Activated T-helper 1 cell treated with anti-CD3 and anti-CD28 coated beads, Interleukin-12 subunit alpha, Interleukin-12 subunit beta, Interleukin-2, Interleukin-4 antibody, amounts not matched to agents 30 ng/mL and 10 ng/mL and 1 ng/mL, durations not matched to agents 14 hours and 24 hours and 36 hours (primary cell): ENCODE measurements at regions of chr16 and their contacts with region 1.

Region 1: DNA sequence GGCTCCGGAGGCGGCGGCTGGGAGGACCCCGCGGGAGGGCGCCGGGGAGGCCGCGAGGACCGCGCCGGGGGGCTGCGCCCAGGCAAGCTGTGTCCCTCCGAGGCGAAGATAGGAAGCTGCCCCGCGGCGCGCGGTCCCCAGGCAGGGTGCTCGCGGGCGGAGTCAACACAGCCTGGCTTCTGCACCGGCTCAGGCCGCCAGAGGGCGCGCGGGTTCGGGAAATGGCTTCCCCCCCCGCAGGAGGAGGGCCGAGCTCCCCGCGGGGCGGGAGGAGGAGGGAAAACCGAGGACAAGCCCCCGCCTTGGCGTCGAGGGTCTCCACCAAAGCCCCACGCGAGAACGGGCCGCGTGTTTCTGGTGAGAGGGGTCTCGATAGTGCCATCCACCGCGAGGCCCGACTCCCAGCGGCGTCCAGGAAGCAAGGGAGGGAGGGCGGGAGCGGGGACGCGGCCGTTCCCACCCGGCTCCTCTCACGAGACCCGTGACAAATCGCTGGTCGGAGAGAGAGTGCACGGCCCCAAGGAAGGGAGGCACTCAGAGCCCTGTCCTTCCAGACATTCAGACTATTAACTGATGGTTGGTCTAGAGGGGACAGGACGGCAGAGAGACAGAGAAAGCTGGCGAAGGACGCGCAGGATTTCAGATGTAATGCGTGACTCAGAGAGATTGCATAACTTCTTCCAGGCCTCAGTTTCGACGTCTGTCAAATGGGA is 64.4 kb upstream of the DNAJA2 start:
- DNase-seq: peak; percentile 85
- H3K4me3 Mint-ChIP-seq: peak overlapping the region; percentile 81
- H3K27ac Mint-ChIP-seq: no peak overlapping the region
- H3K4me1 Mint-ChIP-seq: peaks cover 4% of the 10 kb centered on the region
- H3K27me3 Mint-ChIP-seq: peaks cover 14% of the 10 kb centered on the region

Region 2: DNA sequence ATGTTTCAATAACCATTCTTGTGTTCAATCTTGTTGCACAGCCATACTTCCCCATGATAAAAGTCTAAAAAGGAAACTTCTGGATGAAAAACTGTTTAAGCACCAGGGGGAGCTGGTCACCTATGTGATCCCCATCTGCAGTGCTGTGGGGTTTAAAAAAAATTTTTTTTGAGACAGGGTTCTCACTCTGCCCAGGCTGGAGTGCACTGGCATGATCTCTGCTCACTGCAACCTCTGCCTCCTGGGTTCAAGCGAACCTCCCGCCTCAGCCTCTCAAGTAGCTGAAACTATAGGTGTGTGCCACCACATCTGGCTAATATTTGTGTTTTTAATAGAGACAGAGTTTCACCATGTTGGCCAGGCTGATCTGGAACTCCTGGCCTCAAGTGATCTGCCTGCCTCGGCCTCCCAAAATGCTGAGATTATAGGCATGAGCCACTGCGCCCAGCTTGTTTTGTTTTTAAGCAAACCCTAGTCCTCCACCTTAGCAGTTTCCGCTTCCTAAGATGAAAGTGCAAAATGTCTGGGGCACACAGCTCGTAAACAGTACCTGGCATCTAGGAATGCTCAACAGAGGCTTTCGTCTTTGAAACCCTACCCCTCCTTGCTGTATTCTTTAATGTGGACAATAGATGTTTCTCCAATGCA is 89.9 kb before region 1 on chr16:
- intact Hi-C with region 1: loop called (anchors 1 kb)
- DNase-seq: peak; percentile 19
- H3K4me3 Mint-ChIP-seq: no peak overlapping the region
- H3K27ac Mint-ChIP-seq: no peak overlapping the region
- H3K4me1 Mint-ChIP-seq: peaks cover 9% of the 10 kb centered on the region
- H3K27me3 Mint-ChIP-seq: peaks cover 2% of the 10 kb centered on the region

Region 3: GRCh38 chr16:47018223-47018891 is 19.5 kb before region 1 on chr16:
- intact Hi-C with region 1: loop called (anchors 2 kb)
- DNase-seq: peak; percentile 24
- H3K4me3 Mint-ChIP-seq: no peak overlapping the region
- H3K27ac Mint-ChIP-seq: no peak overlapping the region
- H3K4me1 Mint-ChIP-seq: peaks cover 23% of the 10 kb centered on the region
- H3K27me3 Mint-ChIP-seq: peaks cover 4% of the 10 kb centered on the region

Region 4: GRCh38 chr16:47049901-47050583 is 12.1 kb after region 1 on chr16:
- intact Hi-C with region 1: no loop called
- DNase-seq: no peak
- H3K4me3 Mint-ChIP-seq: no peak overlapping the region
- H3K27ac Mint-ChIP-seq: no peak overlapping the region
- H3K4me1 Mint-ChIP-seq: peaks cover 9% of the 10 kb centered on the region
- H3K27me3 Mint-ChIP-seq: no peaks in the 10 kb centered on the region

Region 5: DNA sequence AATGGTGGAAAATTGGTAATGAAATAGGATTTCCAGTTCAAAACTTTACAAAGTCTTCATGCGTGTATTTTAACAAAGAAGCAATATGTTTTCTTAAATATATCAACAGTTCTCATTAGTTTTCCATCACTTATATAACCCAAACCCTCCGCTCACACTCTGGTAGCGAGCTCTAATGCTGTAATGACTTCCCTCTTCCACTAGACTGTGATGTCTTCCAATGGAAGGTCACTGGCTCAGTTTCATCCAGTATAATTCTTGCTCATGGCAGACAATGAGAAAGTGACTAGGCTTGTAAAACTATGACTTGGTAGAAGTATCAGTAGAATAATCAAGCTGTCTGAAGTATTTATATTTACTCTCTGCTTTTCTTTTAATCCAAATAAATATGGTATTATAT is 73.0 kb after region 1 on chr16:
- intact Hi-C with region 1: loop called (anchors 1 kb)
- DNase-seq: no peak
- H3K4me3 Mint-ChIP-seq: no peak overlapping the region
- H3K27ac Mint-ChIP-seq: no peak overlapping the region
- H3K4me1 Mint-ChIP-seq: peaks cover 20% of the 10 kb centered on the region
- H3K27me3 Mint-ChIP-seq: no peaks in the 10 kb centered on the region

Region 6: GRCh38 chr16:48054881-48055601 is 1017.1 kb after region 1 on chr16:
- intact Hi-C with region 1: loop called (anchors 1 kb)
- DNase-seq: peak; percentile 11
- H3K4me3 Mint-ChIP-seq: no peak overlapping the region
- H3K27ac Mint-ChIP-seq: no peak overlapping the region
- H3K4me1 Mint-ChIP-seq: peaks cover 8% of the 10 kb centered on the region
- H3K27me3 Mint-ChIP-seq: peaks cover 25% of the 10 kb centered on the region

Region 7: DNA sequence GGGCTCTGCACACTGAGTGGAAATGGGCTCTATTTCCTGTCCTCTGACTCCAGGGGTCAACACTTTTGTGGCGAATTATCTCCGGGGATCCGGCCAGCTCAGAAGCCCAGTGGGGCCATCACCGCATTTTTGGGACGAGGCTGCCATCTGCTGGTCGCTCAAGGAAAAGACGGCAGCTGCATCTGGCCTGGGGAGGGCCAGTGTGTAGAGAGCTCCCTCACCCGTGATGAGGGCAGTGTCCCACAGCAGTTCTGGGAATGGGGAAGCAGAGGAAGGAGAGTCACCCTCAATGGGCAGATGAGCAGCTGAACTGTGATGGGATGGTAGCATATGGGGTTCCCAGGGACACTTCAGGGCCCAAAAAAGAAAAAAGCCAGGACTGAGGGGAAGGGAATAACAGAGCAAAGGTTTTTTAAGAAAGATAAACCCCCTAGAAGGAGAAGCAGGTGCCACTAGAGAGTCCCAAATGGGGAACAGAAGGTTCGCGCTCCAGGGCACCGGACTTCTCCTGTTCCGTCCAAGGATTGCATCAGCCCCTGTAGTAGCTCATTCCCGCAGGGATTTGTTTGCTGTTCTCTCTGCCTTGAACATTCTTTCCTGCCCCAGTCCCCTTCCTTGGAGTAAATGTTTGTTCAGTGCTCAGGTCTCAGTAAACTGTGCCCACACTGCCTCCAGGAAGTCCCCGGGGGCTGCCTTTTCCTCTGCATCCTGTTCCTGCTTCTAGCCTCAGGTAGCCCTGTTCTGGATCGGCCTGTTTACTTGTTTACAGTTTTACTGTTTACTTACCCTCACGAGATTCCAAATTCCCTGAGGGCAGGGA is 1127.2 kb after region 1 on chr16:
- intact Hi-C with region 1: loop called (anchors 2 kb)
- DNase-seq: peak; percentile 59
- H3K4me3 Mint-ChIP-seq: no peak overlapping the region
- H3K27ac Mint-ChIP-seq: peak overlapping the region; percentile 21
- H3K4me1 Mint-ChIP-seq: peaks cover 23% of the 10 kb centered on the region
- H3K27me3 Mint-ChIP-seq: peaks cover 6% of the 10 kb centered on the region